ENCODE measurements at regions of chr10 and their contacts with region 1.

Region 1: DNA sequence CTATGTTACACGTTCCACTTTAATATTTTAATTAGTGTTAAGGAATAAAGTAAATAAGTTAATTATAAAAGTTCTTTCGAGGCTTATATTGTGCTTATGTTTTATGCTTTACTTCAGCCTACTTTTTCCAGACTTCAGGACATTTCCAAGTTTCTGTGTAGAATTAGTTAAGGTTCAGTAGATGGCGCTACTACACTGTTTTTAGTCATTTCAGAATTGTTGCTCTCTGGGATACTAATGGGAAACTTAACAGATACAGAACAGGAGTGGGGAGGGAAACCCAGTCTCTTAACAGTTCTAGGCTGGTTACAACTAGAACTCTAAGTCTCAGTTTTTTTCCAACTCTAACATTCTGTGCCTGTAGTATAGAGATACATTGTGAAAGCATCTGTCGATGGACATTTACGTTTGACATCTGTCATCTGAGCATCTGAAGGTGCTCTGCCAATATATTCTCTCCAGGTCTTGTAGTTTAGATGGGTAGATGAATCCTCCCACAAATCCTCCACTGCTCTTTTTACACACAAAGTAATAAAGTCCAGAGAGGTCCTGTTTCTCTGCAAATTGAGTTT is 56.8 kb upstream of the FAM171A1 start:
- DNase-seq: peak; percentile 41
- ATAC-seq: peak; percentile 69
- H3K4me3 ChIP-seq: no peak overlapping the region
- H3K27ac ChIP-seq: no peak overlapping the region
- H3K4me1 ChIP-seq: peaks cover 7% of the 10 kb centered on the region; the same call in 1 of the 2 replicates
- H3K27me3 ChIP-seq: no peaks in the 10 kb centered on the region; a peak in 2 of 5 replicates
- CTCF ChIP-seq: peak; percentile 70
- EP300 ChIP-seq: no peak
- POLR2A ChIP-seq: no peak
- RAD21 ChIP-seq: no peak

Region 2: GRCh38 chr10:15725603-15726002 is 297.7 kb after region 1 on chr10:
- CTCF ChIA-PET with region 1: interaction called, 14 read pairs
- POLR2A ChIA-PET with region 1: no interaction called
- in situ Hi-C with region 1: loop called (anchors 5 kb)
- intact Hi-C with region 1: loop called (anchors 1 kb)
- DNase-seq: peak; percentile 39
- ATAC-seq: peak; percentile 83
- H3K4me3 ChIP-seq: no peak overlapping the region
- H3K27ac ChIP-seq: no peak overlapping the region
- H3K4me1 ChIP-seq: no peaks in the 10 kb centered on the region
- H3K27me3 ChIP-seq: peaks cover 2 to 27% of the 10 kb centered on the region in 2 experiments; a peak in 3 of 5 replicates
- CTCF ChIP-seq: peak; percentile 63
- EP300 ChIP-seq: no peak
- POLR2A ChIP-seq: no peak
- RAD21 ChIP-seq: no peak

Region 3: GRCh38 chr10:15744217-15744865 is 316.4 kb after region 1 on chr10:
- CTCF ChIA-PET with region 1: interaction called, 15 read pairs
- POLR2A ChIA-PET with region 1: no interaction called
- in situ Hi-C with region 1: no loop called
- intact Hi-C with region 1: loop called (anchors 1 kb)
- DNase-seq: peak; percentile 64
- ATAC-seq: peak; percentile 89
- H3K4me3 ChIP-seq: no peak overlapping the region
- H3K27ac ChIP-seq: no peak overlapping the region
- H3K4me1 ChIP-seq: no peaks in the 10 kb centered on the region
- H3K27me3 ChIP-seq: peaks cover 0 to 6% of the 10 kb centered on the region in 2 experiments; a peak in 2 of 5 replicates
- CTCF ChIP-seq: peak; percentile 65
- EP300 ChIP-seq: no peak
- POLR2A ChIP-seq: no peak
- RAD21 ChIP-seq: 0 out of 2 replicates have a peak, but pooled peaks have one; percentile 15

Region 4: DNA sequence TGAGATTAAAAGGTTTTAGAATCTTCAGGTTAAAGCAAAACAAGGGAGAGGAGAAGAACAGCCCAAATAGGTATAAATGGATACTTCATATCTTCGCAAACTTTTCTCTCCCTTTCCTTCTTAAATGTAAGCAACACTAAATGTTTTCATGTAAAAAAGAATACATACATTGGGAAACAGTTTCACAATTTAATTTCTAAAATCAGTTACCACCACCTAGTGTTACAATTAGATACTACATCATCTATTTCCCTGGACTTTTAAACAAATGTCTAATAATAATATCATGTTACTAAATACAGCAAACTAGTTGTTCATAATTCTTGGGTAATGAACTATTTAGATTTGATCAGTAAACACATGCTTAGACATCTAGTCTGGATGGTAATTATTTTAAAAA is 396.6 kb after region 1 on chr10:
- CTCF ChIA-PET with region 1: no interaction called
- POLR2A ChIA-PET with region 1: no interaction called
- in situ Hi-C with region 1: no loop called
- intact Hi-C with region 1: loop called (anchors 5 kb)
- DNase-seq: no peak
- ATAC-seq: no peak
- H3K4me3 ChIP-seq: no peak overlapping the region
- H3K27ac ChIP-seq: no peak overlapping the region
- H3K4me1 ChIP-seq: no peaks in the 10 kb centered on the region
- H3K27me3 ChIP-seq: no peaks in the 10 kb centered on the region
- CTCF ChIP-seq: peak; percentile 31
- EP300 ChIP-seq: no peak
- POLR2A ChIP-seq: no peak
- RAD21 ChIP-seq: no peak